Naive thymus-derived CD4-positive, alpha-beta T cell (primary cell): ENCODE measurements at regions of chr19 and their contacts with region 1.

Region 1: GRCh38 chr19:20167020-20167644 is at the start of gene ZNF486:
- DNase-seq: peak; percentile 73 to 94 (median 90)
- ATAC-seq: peak; percentile 99
- H3K4me3 ChIP-seq: peak within 1 kb of the TSS; percentile 85
- H3K4me3 Mint-ChIP-seq: peak within 1 kb of the TSS; percentile 90 to 99 (median 95)
- H3K27ac ChIP-seq: peak within 1 kb of the TSS; percentile 76
- H3K27ac Mint-ChIP-seq: peak within 1 kb of the TSS; percentile 83 to 98 (median 90)
- H3K4me1 ChIP-seq: peaks cover 9 to 13% of the 10 kb centered on the region in 2 donors
- H3K4me1 Mint-ChIP-seq: peaks cover 13 to 42% (median 36%) of the 10 kb centered on the region in 7 donors
- H3K27me3 ChIP-seq: no peaks in the 10 kb centered on the region
- H3K27me3 Mint-ChIP-seq: no peaks in the 10 kb centered on the region
- total RNA-seq, gene ZNF486: 3.3 to 10.3 (median 4.8) TPM

Region 2: GRCh38 chr19:20039203-20039723 is 127.9 kb before region 1 on chr19 and contains the start of gene ZNF682:
- CTCF ChIA-PET with region 1: interaction called, 3 read pairs
- POLR2A ChIA-PET with region 1: interaction called, 7 read pairs
- intact Hi-C with region 1: loop called in 1 of 2 experiments (anchors 1 kb)
- DNase-seq: peak; percentile 83 to 96 (median 94)
- ATAC-seq: peak; percentile 100
- H3K4me3 ChIP-seq: peak within 1 kb of the TSS; percentile 90
- H3K4me3 Mint-ChIP-seq: peak within 1 kb of the TSS; percentile 92 to 99 (median 96)
- H3K27ac ChIP-seq: peak within 1 kb of the TSS; percentile 81
- H3K27ac Mint-ChIP-seq: peak within 1 kb of the TSS; percentile 86 to 98 (median 94)
- H3K4me1 ChIP-seq: no peaks in the 10 kb centered on the region
- H3K4me1 Mint-ChIP-seq: peaks cover 5 to 27% (median 25%) of the 10 kb centered on the region in 7 donors
- H3K27me3 ChIP-seq: no peaks in the 10 kb centered on the region
- H3K27me3 Mint-ChIP-seq: peaks cover 0 to 5% (median 0%) of the 10 kb centered on the region in 5 donors
- total RNA-seq, gene ZNF682: 5.3 to 13.0 (median 9.5) TPM

Region 3: GRCh38 chr19:20077791-20078463 is 89.2 kb before region 1 on chr19 and contains the start of gene ZNF90:
- CTCF ChIA-PET with region 1: no interaction called
- POLR2A ChIA-PET with region 1: interaction called, 5 read pairs
- intact Hi-C with region 1: loop called in 1 of 2 experiments (anchors 2 kb)
- DNase-seq: peak; percentile 57 to 90 (median 84)
- ATAC-seq: peak; percentile 99
- H3K4me3 ChIP-seq: peak within 1 kb of the TSS; percentile 86
- H3K4me3 Mint-ChIP-seq: peak within 1 kb of the TSS; percentile 86 to 89 (median 88)
- H3K27ac ChIP-seq: no peak within 1 kb of the TSS
- H3K27ac Mint-ChIP-seq: peak within 1 kb of the TSS; percentile 31 to 82 (median 54)
- H3K4me1 ChIP-seq: peaks cover 4 to 8% of the 10 kb centered on the region in 2 donors
- H3K4me1 Mint-ChIP-seq: peaks cover 0 to 27% (median 14%) of the 10 kb centered on the region in 7 donors
- H3K27me3 ChIP-seq: no peaks in the 10 kb centered on the region
- H3K27me3 Mint-ChIP-seq: no peaks in the 10 kb centered on the region
- total RNA-seq, gene ZNF90: 3.4 to 7.7 (median 4.5) TPM

Region 4: GRCh38 chr19:20124879-20125278 is 42.3 kb before region 1 on chr19:
- CTCF ChIA-PET with region 1: no interaction called
- POLR2A ChIA-PET with region 1: no interaction called
- intact Hi-C with region 1: no loop called
- DNase-seq: no peak
- ATAC-seq: no peak
- H3K4me3 ChIP-seq: no peak overlapping the region
- H3K4me3 Mint-ChIP-seq: no peak overlapping the region
- H3K27ac ChIP-seq: no peak overlapping the region
- H3K27ac Mint-ChIP-seq: no peak overlapping the region
- H3K4me1 ChIP-seq: no peaks in the 10 kb centered on the region
- H3K4me1 Mint-ChIP-seq: no peaks in the 10 kb centered on the region
- H3K27me3 ChIP-seq: no peaks in the 10 kb centered on the region
- H3K27me3 Mint-ChIP-seq: no peaks in the 10 kb centered on the region

Region 5: GRCh38 chr19:20423381-20424197 is 256.5 kb after region 1 on chr19:
- CTCF ChIA-PET with region 1: no interaction called
- POLR2A ChIA-PET with region 1: no interaction called
- intact Hi-C with region 1: loop called in 1 of 2 experiments (anchors 2 kb)
- DNase-seq: peak in 7 of 9 donors; percentile 17 to 30 (median 24)
- ATAC-seq: no peak
- H3K4me3 ChIP-seq: peak overlapping the region; percentile 91
- H3K4me3 Mint-ChIP-seq: peak overlapping the region; percentile 89 to 98 (median 93)
- H3K27ac ChIP-seq: peak overlapping the region; percentile 72
- H3K27ac Mint-ChIP-seq: peak overlapping the region; percentile 51 to 96 (median 89)
- H3K4me1 ChIP-seq: peaks cover 0 to 3% of the 10 kb centered on the region in 2 donors
- H3K4me1 Mint-ChIP-seq: peaks cover 4 to 29% (median 16%) of the 10 kb centered on the region in 7 donors
- H3K27me3 ChIP-seq: no peaks in the 10 kb centered on the region
- H3K27me3 Mint-ChIP-seq: no peaks in the 10 kb centered on the region

Region 6: GRCh38 chr19:21396893-21397572 is 1229.9 kb after region 1 on chr19 and contains the start of gene ZNF493:
- CTCF ChIA-PET with region 1: no interaction called
- POLR2A ChIA-PET with region 1: no interaction called
- intact Hi-C with region 1: loop called in 1 of 2 experiments (anchors 10 kb)
- DNase-seq: peak; percentile 76 to 95 (median 91)
- ATAC-seq: peak; percentile 100
- H3K4me3 ChIP-seq: peak within 1 kb of the TSS; percentile 80
- H3K4me3 Mint-ChIP-seq: peak within 1 kb of the TSS; percentile 90 to 99 (median 97)
- H3K27ac ChIP-seq: peak within 1 kb of the TSS; percentile 77
- H3K27ac Mint-ChIP-seq: peak within 1 kb of the TSS; percentile 68 to 97 (median 92)
- H3K4me1 ChIP-seq: peaks cover 6 to 11% of the 10 kb centered on the region in 2 donors
- H3K4me1 Mint-ChIP-seq: peaks cover 19 to 48% (median 32%) of the 10 kb centered on the region in 7 donors
- H3K27me3 ChIP-seq: no peaks in the 10 kb centered on the region
- H3K27me3 Mint-ChIP-seq: peaks cover 0 to 4% (median 0%) of the 10 kb centered on the region in 5 donors
- total RNA-seq, gene ZNF493: 19.7 to 78.3 (median 34.6) TPM

Region 7: GRCh38 chr19:21851596-21852345 is 1684.6 kb after region 1 on chr19:
- CTCF ChIA-PET with region 1: no interaction called
- POLR2A ChIA-PET with region 1: interaction called, 6 read pairs
- intact Hi-C with region 1: loop called in 1 of 2 experiments (anchors 10 kb)
- DNase-seq: peak; percentile 71 to 90 (median 88)
- ATAC-seq: peak; percentile 99
- H3K4me3 ChIP-seq: peak overlapping the region; percentile 98
- H3K4me3 Mint-ChIP-seq: peak overlapping the region; percentile 89 to 96 (median 92)
- H3K27ac ChIP-seq: peak overlapping the region; percentile 90
- H3K27ac Mint-ChIP-seq: peak overlapping the region; percentile 68 to 96 (median 92)
- H3K4me1 ChIP-seq: peaks cover 6 to 10% of the 10 kb centered on the region in 2 donors
- H3K4me1 Mint-ChIP-seq: peaks cover 8 to 34% (median 27%) of the 10 kb centered on the region in 7 donors
- H3K27me3 ChIP-seq: no peaks in the 10 kb centered on the region
- H3K27me3 Mint-ChIP-seq: peaks cover 0 to 1% (median 0%) of the 10 kb centered on the region in 5 donors